ENCODE measurements at regions of chr20 and their contacts with region 1.

Region 1: DNA sequence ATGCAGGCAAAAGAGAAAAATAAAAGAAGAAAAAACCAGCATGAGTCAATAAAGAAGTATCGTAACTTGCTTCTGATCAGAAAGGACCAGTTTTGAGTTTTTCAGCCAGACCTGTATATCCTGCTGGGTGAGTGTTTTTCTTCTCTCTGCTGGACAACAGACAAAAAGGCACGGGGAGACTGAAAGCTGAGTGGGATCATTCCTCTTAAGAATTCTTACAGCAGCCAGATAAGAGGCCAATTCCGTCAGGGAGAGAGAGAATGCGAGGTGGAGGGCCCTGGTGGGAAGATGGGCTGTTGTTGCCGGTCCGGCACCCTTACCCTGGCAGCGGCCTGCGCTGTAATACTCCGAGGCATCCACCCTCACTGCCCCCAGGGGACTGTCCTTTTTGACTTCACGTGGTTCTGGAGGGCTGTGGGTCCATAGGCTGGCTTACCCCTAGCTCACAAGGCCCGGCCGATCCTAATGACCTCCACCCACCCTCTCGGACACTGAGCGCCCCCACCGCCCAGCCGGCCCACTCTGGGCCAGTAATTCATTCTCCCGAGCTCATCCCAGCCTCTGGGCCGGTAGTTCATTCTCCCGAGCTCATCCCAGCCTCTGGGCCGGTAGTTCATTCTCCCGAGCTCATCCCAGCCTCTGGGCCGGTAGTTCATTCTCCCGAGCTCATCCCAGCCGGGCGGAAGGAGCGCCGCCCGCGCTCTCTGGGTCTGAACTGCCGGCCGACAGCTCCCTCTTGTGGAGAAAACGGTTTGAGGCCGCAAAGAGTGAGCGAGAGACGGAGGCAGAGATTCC is 118.3 kb upstream of the SIRPA start:
- DNase-seq: peak; percentile 91
- ATAC-seq: peak; percentile 92
- H3K4me3 Mint-ChIP-seq: peak overlapping the region; percentile 66
- H3K27ac Mint-ChIP-seq: peak overlapping the region; percentile 52
- H3K4me1 Mint-ChIP-seq: peaks cover 15% of the 10 kb centered on the region
- H3K27me3 Mint-ChIP-seq: peaks cover 3% of the 10 kb centered on the region

Region 2: GRCh38 chr20:1313236-1313964 is 463.5 kb before region 1 on chr20:
- CTCF ChIA-PET with region 1: interaction called, 3 read pairs
- POLR2A ChIA-PET with region 1: no interaction called
- intact Hi-C with region 1: loop called in 1 of 2 experiments (anchors 2 kb)
- DNase-seq: peak; percentile 82
- ATAC-seq: peak; percentile 89
- H3K4me3 Mint-ChIP-seq: no peak overlapping the region
- H3K27ac Mint-ChIP-seq: no peak overlapping the region
- H3K4me1 Mint-ChIP-seq: peaks cover 3% of the 10 kb centered on the region
- H3K27me3 Mint-ChIP-seq: no peaks in the 10 kb centered on the region

Region 3: GRCh38 chr20:1353956-1354355 is 422.9 kb before region 1 on chr20:
- CTCF ChIA-PET with region 1: no interaction called
- POLR2A ChIA-PET with region 1: no interaction called
- intact Hi-C with region 1: no loop called
- DNase-seq: no peak
- ATAC-seq: no peak
- H3K4me3 Mint-ChIP-seq: no peak overlapping the region
- H3K27ac Mint-ChIP-seq: no peak overlapping the region
- H3K4me1 Mint-ChIP-seq: peaks cover 20% of the 10 kb centered on the region
- H3K27me3 Mint-ChIP-seq: no peaks in the 10 kb centered on the region

Region 4: GRCh38 chr20:1509237-1509636 is 267.6 kb before region 1 on chr20:
- CTCF ChIA-PET with region 1: interaction called, 29 read pairs
- POLR2A ChIA-PET with region 1: no interaction called
- intact Hi-C with region 1: loop called in 1 of 2 experiments (anchors 1 kb)
- DNase-seq: peak; percentile 52
- ATAC-seq: peak; percentile 93
- H3K4me3 Mint-ChIP-seq: no peak overlapping the region
- H3K27ac Mint-ChIP-seq: no peak overlapping the region
- H3K4me1 Mint-ChIP-seq: no peaks in the 10 kb centered on the region
- H3K27me3 Mint-ChIP-seq: peaks cover 8% of the 10 kb centered on the region

Region 5: DNA sequence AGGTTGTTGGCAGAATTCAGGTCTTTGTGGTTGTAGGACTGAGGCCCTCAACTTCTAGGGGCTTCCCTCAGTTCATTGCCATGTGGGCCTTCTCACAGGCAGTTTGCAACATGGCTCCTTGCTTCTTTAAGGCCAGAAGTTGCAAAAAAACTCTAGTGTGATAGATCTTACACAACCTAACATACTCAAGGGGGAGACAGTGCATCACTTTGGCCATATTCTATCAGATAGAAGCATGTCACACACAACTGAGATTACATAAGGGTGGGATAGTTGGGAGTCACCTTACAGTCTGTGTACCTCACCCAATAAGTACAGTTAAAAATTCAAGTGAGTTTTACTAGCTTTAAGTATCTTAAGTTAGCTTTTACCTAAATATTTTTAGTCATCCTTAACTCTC is 220.9 kb before region 1 on chr20:
- CTCF ChIA-PET with region 1: interaction called, 22 read pairs
- POLR2A ChIA-PET with region 1: no interaction called
- intact Hi-C with region 1: loop called in 1 of 2 experiments (anchors 1 kb)
- DNase-seq: no peak
- ATAC-seq: no peak
- H3K4me3 Mint-ChIP-seq: no peak overlapping the region
- H3K27ac Mint-ChIP-seq: no peak overlapping the region
- H3K4me1 Mint-ChIP-seq: peaks cover 3% of the 10 kb centered on the region
- H3K27me3 Mint-ChIP-seq: no peaks in the 10 kb centered on the region

Region 6: DNA sequence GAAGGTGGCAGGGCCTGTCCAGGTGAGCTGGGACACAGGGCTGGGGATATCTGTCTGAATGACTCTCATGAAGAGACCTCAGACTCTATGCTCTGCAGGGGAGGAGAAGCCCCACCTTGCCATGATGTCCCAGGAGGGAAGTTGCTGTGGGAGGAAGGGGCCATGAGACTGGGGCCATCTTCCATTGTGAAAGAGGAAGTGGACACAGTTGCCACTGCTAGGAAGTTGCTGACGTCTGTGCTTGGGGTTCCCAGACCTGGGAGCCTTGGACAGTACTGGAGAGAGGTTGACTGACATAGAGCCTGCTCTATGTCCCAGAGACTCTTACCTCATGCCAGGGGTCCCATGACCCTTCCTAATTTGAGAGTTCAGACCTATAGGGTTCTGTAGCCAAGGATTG is 181.5 kb before region 1 on chr20:
- CTCF ChIA-PET with region 1: no interaction called
- POLR2A ChIA-PET with region 1: no interaction called
- intact Hi-C with region 1: no loop called
- DNase-seq: no peak
- ATAC-seq: no peak
- H3K4me3 Mint-ChIP-seq: no peak overlapping the region
- H3K27ac Mint-ChIP-seq: no peak overlapping the region
- H3K4me1 Mint-ChIP-seq: no peaks in the 10 kb centered on the region
- H3K27me3 Mint-ChIP-seq: no peaks in the 10 kb centered on the region

Region 7: DNA sequence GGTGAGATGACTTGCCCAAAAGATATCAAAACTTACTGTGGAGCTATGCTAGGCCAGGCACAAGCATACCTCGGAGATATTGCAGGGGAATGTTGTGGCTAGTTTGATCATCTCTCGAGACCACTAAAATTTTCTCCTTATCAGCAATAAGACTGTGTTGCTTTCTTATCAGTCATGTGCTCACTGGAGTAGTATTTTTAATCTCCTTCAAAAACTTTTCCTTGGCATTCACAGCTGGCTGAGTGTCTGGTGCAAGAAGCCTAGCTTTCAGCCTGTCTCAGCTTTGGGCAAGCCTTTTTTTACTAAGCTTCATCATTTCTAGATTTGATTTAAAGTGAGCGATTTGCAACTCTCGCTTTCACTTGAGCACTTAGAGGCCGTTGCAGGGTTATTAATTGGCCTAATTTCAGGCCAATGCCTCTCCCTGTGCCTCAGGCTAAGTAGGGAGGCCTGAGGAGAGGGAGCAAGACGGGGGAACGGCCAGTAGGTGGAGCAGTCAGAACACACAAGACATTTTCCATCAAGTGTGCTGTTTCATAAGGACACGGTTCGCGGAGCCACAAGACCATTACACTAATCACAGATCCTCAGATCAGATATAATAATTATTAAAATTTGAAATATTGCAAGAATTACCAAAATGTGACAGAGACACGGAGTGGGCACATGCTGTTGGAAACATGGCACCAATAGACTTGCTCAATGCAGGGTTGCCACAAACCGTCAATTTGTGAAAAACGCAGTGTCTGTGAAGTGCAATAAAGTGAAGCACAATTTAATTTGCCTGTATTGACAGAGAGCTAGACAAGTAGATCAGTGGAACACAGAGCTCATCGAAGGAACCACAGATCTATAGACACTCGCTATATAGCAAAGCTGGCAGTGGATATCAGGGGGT is 12.5 kb before region 1 on chr20:
- CTCF ChIA-PET with region 1: interaction called, 69 read pairs
- POLR2A ChIA-PET with region 1: no interaction called
- intact Hi-C with region 1: loop called (anchors 1 kb)
- DNase-seq: peak; percentile 83
- ATAC-seq: peak; percentile 74
- H3K4me3 Mint-ChIP-seq: no peak overlapping the region
- H3K27ac Mint-ChIP-seq: no peak overlapping the region
- H3K4me1 Mint-ChIP-seq: no peaks in the 10 kb centered on the region
- H3K27me3 Mint-ChIP-seq: peaks cover 2% of the 10 kb centered on the region

Region 8: GRCh38 chr20:2172305-2173175 is 395.7 kb after region 1 on chr20:
- CTCF ChIA-PET with region 1: interaction called, 3 read pairs
- POLR2A ChIA-PET with region 1: no interaction called
- intact Hi-C with region 1: loop called in 1 of 2 experiments (anchors 10 kb)
- DNase-seq: peak; percentile 82
- ATAC-seq: peak; percentile 72
- H3K4me3 Mint-ChIP-seq: peak overlapping the region; percentile 2
- H3K27ac Mint-ChIP-seq: no peak overlapping the region
- H3K4me1 Mint-ChIP-seq: peaks cover 2% of the 10 kb centered on the region
- H3K27me3 Mint-ChIP-seq: peaks cover 11% of the 10 kb centered on the region